CD8-positive, alpha-beta memory T cell (primary cell): ENCODE measurements at regions of chr19 and their contacts with region 1.

Region 1: DNA sequence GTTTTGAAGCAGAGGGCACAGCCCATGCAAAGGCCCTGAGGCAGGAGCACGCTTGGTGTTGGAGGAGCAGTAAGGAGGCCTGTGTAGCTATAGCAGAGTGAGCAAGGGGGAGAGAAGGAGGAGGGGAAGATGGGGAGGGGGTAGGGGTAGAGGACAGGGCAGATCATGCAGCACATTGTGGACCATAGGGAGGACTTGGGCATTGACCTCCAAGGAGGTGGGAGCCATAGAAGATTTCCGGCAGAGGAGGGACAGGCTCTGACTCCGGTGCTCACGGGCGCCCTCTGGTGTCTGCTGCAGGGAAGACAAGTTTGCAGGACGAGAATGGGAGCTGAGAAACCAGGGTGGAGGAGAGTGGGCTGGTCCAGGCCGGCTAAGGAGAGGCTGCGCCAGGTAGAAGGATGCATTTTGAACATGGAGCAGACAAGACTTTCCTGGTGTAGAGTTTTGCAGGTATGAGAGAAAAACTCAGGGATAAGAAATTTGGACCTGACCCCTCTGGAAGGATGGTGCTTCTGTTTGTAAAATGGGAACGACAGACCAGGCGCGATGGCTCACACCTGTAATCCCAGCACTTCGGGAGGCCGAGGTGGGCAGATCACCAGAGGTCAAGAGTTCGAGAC is 13.7 kb upstream of the CREB3L3 start:
- DNase-seq: peak; percentile 71 to 87 (median 82)
- H3K4me3 ChIP-seq: no peak overlapping the region
- H3K4me3 Mint-ChIP-seq: peak overlapping the region in 6 of 7 donors; percentile 19 to 67 (median 34)
- H3K27ac ChIP-seq: no peak overlapping the region
- H3K27ac Mint-ChIP-seq: peak overlapping the region in 6 of 8 donors; percentile 1 to 92 (median 71)
- H3K4me1 ChIP-seq: peaks cover 9% of the 10 kb centered on the region
- H3K4me1 Mint-ChIP-seq: peaks cover 8 to 12% (median 11%) of the 10 kb centered on the region in 3 donors
- H3K27me3 ChIP-seq: no peaks in the 10 kb centered on the region
- H3K27me3 Mint-ChIP-seq: peaks cover 7 to 15% of the 10 kb centered on the region in 2 donors

Region 2: GRCh38 chr19:3783660-3784584 is 355.8 kb before region 1 on chr19:
- CTCF ChIA-PET with region 1: no interaction called
- POLR2A ChIA-PET with region 1: interaction called, 10 read pairs
- DNase-seq: peak in 4 of 5 donors; percentile 38 to 68 (median 55)
- H3K4me3 ChIP-seq: no peak overlapping the region
- H3K4me3 Mint-ChIP-seq: peak overlapping the region; percentile 83 to 95 (median 90)
- H3K27ac ChIP-seq: no peak overlapping the region
- H3K27ac Mint-ChIP-seq: peak overlapping the region; percentile 67 to 96 (median 89)
- H3K4me1 ChIP-seq: peaks cover 14% of the 10 kb centered on the region
- H3K4me1 Mint-ChIP-seq: peaks cover 27 to 40% (median 36%) of the 10 kb centered on the region in 3 donors
- H3K27me3 ChIP-seq: no peaks in the 10 kb centered on the region
- H3K27me3 Mint-ChIP-seq: peaks cover 0 to 1% of the 10 kb centered on the region in 2 donors

Region 3: GRCh38 chr19:3852614-3853254 is 287.0 kb before region 1 on chr19:
- CTCF ChIA-PET with region 1: no interaction called
- POLR2A ChIA-PET with region 1: no interaction called
- DNase-seq: peak; percentile 33 to 71 (median 41)
- H3K4me3 ChIP-seq: no peak overlapping the region
- H3K4me3 Mint-ChIP-seq: no peak overlapping the region
- H3K27ac ChIP-seq: no peak overlapping the region
- H3K27ac Mint-ChIP-seq: peak overlapping the region in 1 of 8 donors; percentile 57
- H3K4me1 ChIP-seq: no peaks in the 10 kb centered on the region
- H3K4me1 Mint-ChIP-seq: no peaks in the 10 kb centered on the region
- H3K27me3 ChIP-seq: no peaks in the 10 kb centered on the region
- H3K27me3 Mint-ChIP-seq: peaks cover 0 to 1% of the 10 kb centered on the region in 2 donors

Region 4: DNA sequence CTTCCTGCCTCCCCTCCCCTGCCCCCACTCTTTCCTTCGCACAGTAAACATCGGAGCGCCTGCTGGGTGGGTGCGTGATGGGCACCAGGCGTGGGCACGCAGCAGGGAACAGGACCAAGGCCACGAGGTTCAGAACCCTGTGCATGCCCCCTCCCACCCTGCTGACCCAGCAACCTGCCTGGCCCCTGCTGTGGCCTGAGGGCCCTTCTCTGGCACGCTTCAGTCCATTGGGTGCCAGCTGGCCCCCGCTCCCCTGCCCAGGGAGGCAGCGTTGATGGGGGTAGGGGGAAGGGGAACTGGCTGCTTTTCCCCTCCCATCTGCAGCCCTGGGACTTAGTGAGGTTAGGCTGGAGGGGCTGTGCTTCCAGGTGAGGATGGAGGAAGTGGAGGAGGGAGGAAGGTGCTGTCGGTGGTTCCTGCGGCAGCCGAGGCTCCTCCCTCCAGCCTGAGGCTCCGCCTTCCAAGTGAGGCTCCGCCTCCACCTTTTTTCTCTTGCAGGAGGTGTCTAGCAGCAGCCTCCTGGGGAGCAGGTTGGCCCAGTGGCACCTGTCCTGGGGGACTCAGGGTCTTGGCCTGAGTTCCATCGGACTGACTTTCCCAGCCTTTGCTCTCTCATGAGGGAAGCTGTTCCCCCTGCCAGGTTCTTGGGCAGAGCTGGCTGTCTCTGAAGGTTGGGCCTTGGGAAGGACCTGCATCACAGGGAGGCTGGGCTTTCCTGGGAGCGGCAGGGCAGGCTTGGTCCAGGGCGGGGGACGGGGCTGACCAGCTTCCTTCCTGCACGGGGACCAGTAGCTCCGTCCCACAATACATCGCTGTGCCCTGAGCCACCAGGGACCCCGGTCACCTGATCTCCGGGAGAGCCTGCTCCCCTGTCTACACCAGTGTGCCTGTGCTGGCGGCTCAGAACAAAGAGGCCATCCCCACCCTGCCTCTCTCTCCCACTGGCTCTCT is 124.9 kb before region 1 on chr19:
- CTCF ChIA-PET with region 1: no interaction called
- POLR2A ChIA-PET with region 1: no interaction called
- DNase-seq: peak in 3 of 5 donors; percentile 21 to 41 (median 31)
- H3K4me3 ChIP-seq: no peak overlapping the region
- H3K4me3 Mint-ChIP-seq: no peak overlapping the region
- H3K27ac ChIP-seq: no peak overlapping the region
- H3K27ac Mint-ChIP-seq: peak overlapping the region in 1 of 8 donors; percentile 91
- H3K4me1 ChIP-seq: peaks cover 8% of the 10 kb centered on the region
- H3K4me1 Mint-ChIP-seq: peaks cover 5 to 49% (median 15%) of the 10 kb centered on the region in 3 donors
- H3K27me3 ChIP-seq: no peaks in the 10 kb centered on the region
- H3K27me3 Mint-ChIP-seq: no peaks in the 10 kb centered on the region

Region 5: GRCh38 chr19:4089400-4089908 is 50.3 kb before region 1 on chr19:
- CTCF ChIA-PET with region 1: interaction called, 15 read pairs
- POLR2A ChIA-PET with region 1: interaction called, 3 read pairs
- DNase-seq: peak; percentile 37 to 74 (median 52)
- H3K4me3 ChIP-seq: peak overlapping the region; percentile 49
- H3K4me3 Mint-ChIP-seq: peak overlapping the region; percentile 59 to 78 (median 72)
- H3K27ac ChIP-seq: peak overlapping the region; percentile 62
- H3K27ac Mint-ChIP-seq: peak overlapping the region; percentile 81 to 96 (median 94)
- H3K4me1 ChIP-seq: peaks cover 48% of the 10 kb centered on the region
- H3K4me1 Mint-ChIP-seq: peaks cover 35 to 52% (median 48%) of the 10 kb centered on the region in 3 donors
- H3K27me3 ChIP-seq: no peaks in the 10 kb centered on the region
- H3K27me3 Mint-ChIP-seq: no peaks in the 10 kb centered on the region

Region 6: GRCh38 chr19:4103073-4103418 is 36.7 kb before region 1 on chr19:
- CTCF ChIA-PET with region 1: interaction called, 20 read pairs
- POLR2A ChIA-PET with region 1: interaction called, 8 read pairs
- DNase-seq: no peak
- H3K4me3 ChIP-seq: no peak overlapping the region
- H3K4me3 Mint-ChIP-seq: no peak overlapping the region
- H3K27ac ChIP-seq: no peak overlapping the region
- H3K27ac Mint-ChIP-seq: peak overlapping the region in 1 of 8 donors; percentile 99
- H3K4me1 ChIP-seq: peaks cover 38% of the 10 kb centered on the region
- H3K4me1 Mint-ChIP-seq: peaks cover 31 to 43% (median 38%) of the 10 kb centered on the region in 3 donors
- H3K27me3 ChIP-seq: no peaks in the 10 kb centered on the region
- H3K27me3 Mint-ChIP-seq: peaks cover 0 to 4% of the 10 kb centered on the region in 2 donors

Region 7: DNA sequence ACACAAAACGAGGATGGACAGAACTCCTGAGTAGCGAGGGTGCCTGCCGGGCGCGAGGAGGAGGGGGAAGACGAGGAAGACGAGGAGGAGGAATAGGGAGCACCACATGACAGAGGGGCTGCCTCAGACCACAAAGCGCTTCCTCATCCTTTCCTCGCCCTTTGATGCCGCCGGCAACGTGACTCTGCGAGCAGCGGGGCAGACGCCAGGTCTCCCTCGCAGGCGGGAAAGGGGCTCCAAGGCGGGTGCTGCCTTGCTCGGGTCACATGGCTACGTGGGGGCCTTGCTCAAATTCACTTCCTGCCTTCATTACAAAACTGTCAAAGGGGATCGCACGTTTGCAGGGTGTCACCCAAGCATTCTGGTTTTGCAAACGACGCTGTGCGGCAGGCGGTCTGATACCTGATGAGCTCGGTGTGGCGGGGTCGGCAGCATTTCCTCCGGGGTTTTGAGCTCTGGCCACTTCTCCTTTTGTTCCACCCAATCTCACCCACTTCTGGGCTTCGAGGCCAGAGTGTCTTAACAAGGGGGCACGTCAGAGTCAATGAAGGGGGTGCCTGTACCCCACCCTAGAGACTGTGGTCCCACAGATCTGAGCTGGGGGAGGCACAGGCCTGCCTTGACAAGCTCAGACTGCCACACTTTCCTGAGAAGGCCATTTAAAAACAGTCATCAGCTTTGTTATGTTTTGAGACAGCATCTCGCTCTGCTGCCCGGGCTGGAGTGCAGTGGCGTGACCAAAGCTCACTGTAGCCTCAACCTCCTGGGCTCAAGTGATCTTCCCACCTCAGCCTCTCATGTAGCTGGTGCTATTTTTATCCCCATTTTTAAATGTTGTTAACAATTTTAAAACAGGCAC is 30.7 kb before region 1 on chr19:
- CTCF ChIA-PET with region 1: interaction called, 20 read pairs
- POLR2A ChIA-PET with region 1: interaction called, 8 read pairs
- DNase-seq: peak; percentile 73 to 92 (median 87)
- H3K4me3 ChIP-seq: peak overlapping the region; percentile 8
- H3K4me3 Mint-ChIP-seq: peak overlapping the region; percentile 40 to 91 (median 71)
- H3K27ac ChIP-seq: peak overlapping the region; percentile 62
- H3K27ac Mint-ChIP-seq: peak overlapping the region; percentile 91 to 99 (median 98)
- H3K4me1 ChIP-seq: peaks cover 59% of the 10 kb centered on the region
- H3K4me1 Mint-ChIP-seq: peaks cover 54 to 83% (median 64%) of the 10 kb centered on the region in 3 donors
- H3K27me3 ChIP-seq: no peaks in the 10 kb centered on the region
- H3K27me3 Mint-ChIP-seq: peaks cover 0 to 4% of the 10 kb centered on the region in 2 donors

Region 8: DNA sequence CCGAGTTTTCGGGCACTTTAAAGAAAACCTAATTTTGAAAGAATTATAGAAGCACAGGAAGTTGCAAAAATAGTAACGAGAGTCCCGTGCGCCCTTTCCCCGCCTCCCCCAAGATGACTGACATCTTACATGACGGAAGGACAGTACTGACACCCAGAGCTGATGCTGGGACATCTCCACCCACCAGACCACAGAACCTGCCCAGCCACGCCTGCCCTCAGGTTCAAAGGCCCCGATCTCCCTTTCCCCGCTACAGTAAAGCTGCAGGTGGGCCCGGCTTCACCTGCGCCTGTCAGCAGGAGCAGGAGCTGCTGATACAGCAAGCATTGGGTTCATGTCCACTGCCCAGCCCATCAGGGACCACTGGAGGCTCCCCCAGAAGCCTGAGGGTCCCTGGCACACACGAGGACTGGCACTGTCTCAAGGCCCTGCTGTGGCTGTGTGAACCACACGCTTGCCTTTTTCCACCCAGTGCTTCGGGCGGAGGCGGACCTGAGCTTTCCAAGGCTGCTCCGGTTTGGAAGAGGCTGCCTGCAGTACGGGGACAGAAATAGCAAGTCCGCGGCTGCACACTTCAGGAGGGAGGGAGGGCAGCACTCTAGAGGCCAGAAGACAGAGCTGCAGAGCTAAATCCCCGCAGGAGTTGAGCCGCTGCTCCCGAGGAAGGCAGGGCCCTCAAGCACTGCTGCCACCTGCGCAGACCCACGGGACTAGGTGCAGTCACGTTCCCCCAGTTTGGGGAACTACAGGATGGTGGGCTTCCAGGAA is 24.5 kb before region 1 on chr19:
- CTCF ChIA-PET with region 1: interaction called, 15 read pairs
- POLR2A ChIA-PET with region 1: no interaction called
- DNase-seq: peak; percentile 57 to 85 (median 77)
- H3K4me3 ChIP-seq: peak overlapping the region; percentile 22
- H3K4me3 Mint-ChIP-seq: peak overlapping the region; percentile 51 to 78 (median 67)
- H3K27ac ChIP-seq: peak overlapping the region; percentile 26
- H3K27ac Mint-ChIP-seq: peak overlapping the region; percentile 84 to 94 (median 89)
- H3K4me1 ChIP-seq: peaks cover 29% of the 10 kb centered on the region
- H3K4me1 Mint-ChIP-seq: peaks cover 34 to 62% (median 35%) of the 10 kb centered on the region in 3 donors
- H3K27me3 ChIP-seq: no peaks in the 10 kb centered on the region
- H3K27me3 Mint-ChIP-seq: no peaks in the 10 kb centered on the region

Region 9: DNA sequence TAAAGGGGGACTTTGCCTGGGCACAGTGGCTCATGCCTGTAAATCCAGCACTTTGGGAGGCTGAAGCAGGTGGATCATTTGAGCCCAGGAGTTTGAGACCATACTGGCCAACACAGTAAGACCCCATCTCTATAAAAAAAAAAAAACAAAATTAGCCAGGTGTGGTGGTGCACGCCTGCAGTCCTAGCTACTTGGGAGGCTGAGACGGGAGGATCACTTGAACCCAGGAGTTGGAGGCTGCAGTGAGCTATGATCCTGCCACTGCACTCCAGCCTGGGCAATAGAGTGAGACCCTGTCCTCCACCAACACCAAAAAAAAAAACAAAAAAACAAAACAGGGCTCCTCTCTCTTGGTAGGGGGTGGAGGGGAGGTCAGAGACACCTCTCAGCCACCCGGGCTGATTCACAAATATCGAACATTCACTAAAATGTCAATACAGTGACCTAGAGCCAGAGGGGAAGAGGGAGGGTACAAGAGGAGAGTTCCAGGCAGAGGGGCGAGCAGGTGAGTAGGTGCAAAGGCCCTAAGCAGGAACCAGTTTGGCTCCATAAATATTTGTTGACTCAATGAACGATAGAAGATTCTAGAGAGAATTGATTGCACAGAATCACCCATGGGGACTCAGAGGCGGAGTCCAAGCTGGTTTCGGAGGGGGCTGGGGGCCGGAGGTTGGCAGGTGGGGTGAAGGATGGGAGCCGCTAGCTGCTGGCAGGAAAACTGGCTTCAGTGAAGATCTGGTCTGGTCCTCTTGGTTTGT is 12.7 kb after region 1 on chr19:
- CTCF ChIA-PET with region 1: interaction called, 13 read pairs
- POLR2A ChIA-PET with region 1: no interaction called
- DNase-seq: no peak
- H3K4me3 ChIP-seq: no peak overlapping the region
- H3K4me3 Mint-ChIP-seq: no peak overlapping the region
- H3K27ac ChIP-seq: no peak overlapping the region
- H3K27ac Mint-ChIP-seq: no peak overlapping the region
- H3K4me1 ChIP-seq: no peaks in the 10 kb centered on the region
- H3K4me1 Mint-ChIP-seq: peaks cover 5 to 7% (median 5%) of the 10 kb centered on the region in 3 donors
- H3K27me3 ChIP-seq: no peaks in the 10 kb centered on the region
- H3K27me3 Mint-ChIP-seq: peaks cover 2 to 11% of the 10 kb centered on the region in 2 donors

Region 10: GRCh38 chr19:4976401-4977298 is 836.9 kb after region 1 on chr19:
- CTCF ChIA-PET with region 1: no interaction called
- POLR2A ChIA-PET with region 1: no interaction called
- DNase-seq: no peak
- H3K4me3 ChIP-seq: no peak overlapping the region
- H3K4me3 Mint-ChIP-seq: no peak overlapping the region
- H3K27ac ChIP-seq: no peak overlapping the region
- H3K27ac Mint-ChIP-seq: peak overlapping the region in 1 of 8 donors; percentile 81
- H3K4me1 ChIP-seq: no peaks in the 10 kb centered on the region
- H3K4me1 Mint-ChIP-seq: peaks cover 9 to 47% (median 22%) of the 10 kb centered on the region in 3 donors
- H3K27me3 ChIP-seq: no peaks in the 10 kb centered on the region
- H3K27me3 Mint-ChIP-seq: peaks cover 0 to 3% of the 10 kb centered on the region in 2 donors